ENCODE measurements at regions of chr7 and their contacts with region 1.

Region 1: GRCh38 chr7:54788664-54789063 is 29.7 kb upstream of the SEC61G start:
- DNase-seq: no peak
- H3K4me3 Mint-ChIP-seq: no peak overlapping the region
- H3K27ac Mint-ChIP-seq: no peak overlapping the region
- H3K4me1 Mint-ChIP-seq: no peaks in the 10 kb centered on the region
- H3K27me3 Mint-ChIP-seq: peaks cover 34% of the 10 kb centered on the region

Region 2: GRCh38 chr7:54483523-54483922 is 305.1 kb before region 1 on chr7:
- CTCF ChIA-PET with region 1: no interaction called
- POLR2A ChIA-PET with region 1: no interaction called
- DNase-seq: no peak
- H3K4me3 Mint-ChIP-seq: no peak overlapping the region
- H3K27ac Mint-ChIP-seq: no peak overlapping the region
- H3K4me1 Mint-ChIP-seq: no peaks in the 10 kb centered on the region
- H3K27me3 Mint-ChIP-seq: no peaks in the 10 kb centered on the region

Region 3: DNA sequence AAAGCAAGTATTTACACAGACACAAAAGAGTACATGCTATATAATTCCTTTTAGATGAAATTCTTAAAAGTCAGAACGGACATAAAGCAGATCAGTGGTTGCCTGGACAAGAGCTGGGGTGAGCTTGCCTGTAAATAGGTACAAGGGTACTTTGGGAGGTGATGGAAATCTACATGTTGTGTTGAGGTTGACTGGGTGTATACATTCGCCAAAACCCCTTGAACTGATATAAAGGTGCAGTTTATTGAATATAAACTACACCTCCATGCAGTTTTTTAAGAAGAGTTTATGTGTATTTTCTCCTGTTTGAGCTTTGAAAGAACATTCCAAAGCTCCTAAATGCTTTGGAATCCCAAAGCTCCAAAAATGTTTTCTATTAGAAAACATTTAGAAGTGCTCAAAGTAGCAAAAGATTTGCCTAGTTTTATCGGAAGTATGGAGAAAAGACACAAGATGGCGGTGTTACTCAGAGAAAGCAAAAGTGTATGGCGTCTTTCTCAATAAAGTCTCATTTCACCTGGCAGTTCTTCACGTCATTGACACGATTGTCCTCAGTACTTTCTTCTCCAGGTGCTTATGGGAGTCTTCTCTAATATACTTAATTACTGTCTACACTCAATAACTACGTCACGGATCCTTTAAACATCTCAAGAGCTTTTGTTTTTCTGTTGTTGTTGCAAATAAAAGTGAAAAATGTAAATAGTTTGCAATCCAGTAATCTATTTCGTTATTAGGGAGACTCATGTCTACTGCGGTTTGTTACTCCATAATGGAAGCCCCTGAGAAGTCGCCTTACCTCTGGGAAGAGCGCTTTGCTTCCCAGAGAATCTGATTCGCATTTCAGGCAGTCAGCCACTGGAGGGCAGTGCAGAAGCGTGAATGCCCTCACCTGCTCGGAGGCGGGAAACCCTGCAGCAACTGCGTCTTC is 14.9 kb before region 1 on chr7:
- CTCF ChIA-PET with region 1: interaction called, 12 read pairs
- POLR2A ChIA-PET with region 1: no interaction called
- DNase-seq: peak; percentile 69
- H3K4me3 Mint-ChIP-seq: peak overlapping the region; percentile 66
- H3K27ac Mint-ChIP-seq: no peak overlapping the region
- H3K4me1 Mint-ChIP-seq: peaks cover 9% of the 10 kb centered on the region
- H3K27me3 Mint-ChIP-seq: peaks cover 29% of the 10 kb centered on the region

Region 4: DNA sequence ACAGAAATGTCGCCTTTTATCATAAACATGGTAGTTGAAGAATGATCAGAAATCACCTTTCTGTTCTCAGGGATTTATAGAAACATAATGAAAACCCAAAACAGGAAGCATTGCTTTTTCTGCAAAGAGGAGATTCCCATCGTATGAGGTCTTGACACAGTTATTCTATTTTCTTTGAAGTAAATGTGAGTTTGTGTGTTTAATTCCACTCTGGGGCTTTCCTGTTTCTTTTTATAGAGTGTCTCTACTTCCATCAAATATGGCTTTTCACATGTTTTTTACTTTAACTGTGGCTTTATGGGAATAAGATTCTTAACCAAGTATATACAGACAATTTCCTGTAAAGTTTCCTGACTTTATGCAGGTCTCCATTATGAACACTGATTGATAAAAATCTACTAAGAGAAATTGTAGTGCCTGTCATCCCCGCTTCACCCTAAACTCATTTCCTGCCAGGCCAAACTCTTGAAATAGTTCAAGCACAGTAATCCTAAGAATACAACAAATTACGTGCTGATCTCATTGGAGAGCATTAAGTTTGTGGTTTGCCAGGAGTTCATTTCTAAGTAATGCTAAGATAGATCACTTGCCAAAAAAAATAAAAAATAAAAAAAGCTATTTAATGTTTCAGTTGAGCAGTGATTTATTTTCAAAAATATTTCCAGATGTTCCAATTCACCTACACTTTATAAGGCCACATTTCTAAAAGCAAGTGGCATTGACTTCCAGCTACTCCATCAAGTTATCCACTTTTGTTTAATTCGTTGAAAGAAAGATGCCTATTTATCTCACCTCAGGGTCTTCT is 22.6 kb after region 1 on chr7:
- CTCF ChIA-PET with region 1: no interaction called
- POLR2A ChIA-PET with region 1: no interaction called
- DNase-seq: no peak
- H3K4me3 Mint-ChIP-seq: no peak overlapping the region
- H3K27ac Mint-ChIP-seq: no peak overlapping the region
- H3K4me1 Mint-ChIP-seq: no peaks in the 10 kb centered on the region
- H3K27me3 Mint-ChIP-seq: peaks cover 2% of the 10 kb centered on the region